Cardiac septum (tissue), 1 donor: ENCODE measurements at regions of chr2 and their contacts with region 1.

Region 1: GRCh38 chr2:217836901-217837491 is 165.8 kb downstream of the TNS1 start:
- DNase-seq: peak; percentile 91

Region 2: GRCh38 chr2:217857624-217858506 is 20.9 kb after region 1 on chr2:
- intact Hi-C with region 1: loop called (anchors 2 kb)
- DNase-seq: no peak

Region 3: GRCh38 chr2:218516614-218517013 is 679.6 kb after region 1 on chr2:
- intact Hi-C with region 1: no loop called
- DNase-seq: no peak